ENCODE measurements at regions of chr18 and their contacts with region 1.

Region 1: DNA sequence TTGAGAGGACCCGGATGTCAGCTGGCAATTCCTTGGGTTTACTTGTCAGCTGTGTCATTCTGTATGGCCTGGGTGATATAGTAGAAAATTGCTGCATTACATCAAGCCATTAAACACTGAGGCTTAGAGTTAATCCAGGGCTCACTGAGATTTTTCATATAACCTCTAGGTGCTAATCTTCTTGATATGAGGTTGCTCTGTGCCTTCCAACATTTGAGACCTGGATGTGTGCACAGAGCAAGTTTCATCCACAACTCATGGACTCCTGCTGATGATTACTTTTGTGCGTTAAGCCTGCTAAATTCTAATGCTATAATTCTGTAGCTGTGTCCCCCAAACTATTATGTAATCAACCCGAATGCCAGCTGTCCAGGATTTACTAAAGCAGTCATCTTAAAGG is 178.4 kb upstream of the CDH20 start:
- DNase-seq: no peak
- H3K4me3 ChIP-seq: no peak overlapping the region
- H3K27ac ChIP-seq: no peak overlapping the region
- H3K4me1 ChIP-seq: no peaks in the 10 kb centered on the region
- H3K27me3 ChIP-seq: no peaks in the 10 kb centered on the region
- CTCF ChIP-seq: no peak
- POLR2A ChIP-seq: no peak

Region 2: GRCh38 chr18:61103795-61104194 is 51.1 kb before region 1 on chr18:
- intact Hi-C with region 1: loop called (anchors 5 kb)
- DNase-seq: no peak
- H3K4me3 ChIP-seq: no peak overlapping the region
- H3K27ac ChIP-seq: no peak overlapping the region
- H3K4me1 ChIP-seq: no peaks in the 10 kb centered on the region
- H3K27me3 ChIP-seq: no peaks in the 10 kb centered on the region
- CTCF ChIP-seq: no peak
- POLR2A ChIP-seq: no peak

Measured in prostate gland (tissue), 2 donors.